Gastrocnemius medialis (tissue), 4 donors: ENCODE measurements at regions of chr19 and their contacts with region 1.

Region 1: GRCh38 chr19:49929611-49930482 is 543 bp upstream of the NUP62 start:
- DNase-seq: peak; percentile 91 to 95
- ATAC-seq: peak; percentile 91 to 95
- H3K4me3 ChIP-seq: peak overlapping the region; percentile 80 to 97 (median 92)
- H3K27ac ChIP-seq: peak overlapping the region; percentile 95 to 98 (median 96)
- H3K4me1 ChIP-seq: peaks cover 24 to 29% of the 10 kb centered on the region in 2 donors
- H3K27me3 ChIP-seq: no peaks in the 10 kb centered on the region
- CTCF ChIP-seq: peak in 1 of 5 experiments; percentile 29
- POLR2A ChIP-seq: peak; percentile 67 to 86

Region 2: DNA sequence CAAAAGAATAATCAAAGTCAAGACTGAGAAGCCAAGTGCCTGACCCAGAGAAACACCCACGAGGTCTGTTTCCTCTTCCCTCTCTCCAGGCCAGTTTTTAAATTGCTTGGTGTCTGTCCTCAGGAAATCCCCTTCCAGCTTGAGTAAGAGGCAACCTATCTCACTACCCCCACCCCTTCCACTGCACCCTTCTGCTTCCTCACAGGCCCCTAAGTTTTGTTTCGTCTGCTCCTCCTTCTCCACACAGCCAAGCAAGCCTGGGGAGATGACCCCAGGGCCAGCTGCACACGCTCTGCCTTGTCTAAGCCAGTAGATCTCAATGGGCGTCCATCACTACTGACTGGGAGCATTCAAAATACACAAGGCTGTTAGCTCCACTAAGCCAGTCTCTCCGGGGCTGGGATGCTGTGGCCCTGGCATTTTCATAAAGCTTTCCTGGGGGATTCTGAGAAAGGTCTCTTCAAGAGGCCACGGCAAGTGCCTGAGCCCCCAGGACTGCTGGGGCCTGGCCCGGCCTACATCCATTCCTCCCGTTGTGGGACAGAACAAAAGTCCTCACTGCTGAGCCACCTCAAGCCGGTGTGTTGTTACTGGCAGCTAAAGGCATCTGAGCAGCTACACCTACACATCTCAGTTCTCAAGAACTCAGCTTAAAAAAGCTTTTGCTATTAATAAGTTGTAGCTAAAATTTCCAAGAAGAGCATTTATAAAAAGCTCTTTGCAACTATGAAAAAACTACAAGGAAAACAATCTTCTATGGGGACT is 18.3 kb before region 1 on chr19:
- in situ Hi-C with region 1: no loop called
- intact Hi-C with region 1: no loop called
- DNase-seq: no peak
- ATAC-seq: peak in 1 of 2 donors; percentile 28
- H3K4me3 ChIP-seq: no peak overlapping the region
- H3K27ac ChIP-seq: no peak overlapping the region
- H3K4me1 ChIP-seq: peaks cover 0 to 11% of the 10 kb centered on the region in 2 donors
- H3K27me3 ChIP-seq: no peaks in the 10 kb centered on the region
- CTCF ChIP-seq: no peak
- POLR2A ChIP-seq: no peak

Region 3: DNA sequence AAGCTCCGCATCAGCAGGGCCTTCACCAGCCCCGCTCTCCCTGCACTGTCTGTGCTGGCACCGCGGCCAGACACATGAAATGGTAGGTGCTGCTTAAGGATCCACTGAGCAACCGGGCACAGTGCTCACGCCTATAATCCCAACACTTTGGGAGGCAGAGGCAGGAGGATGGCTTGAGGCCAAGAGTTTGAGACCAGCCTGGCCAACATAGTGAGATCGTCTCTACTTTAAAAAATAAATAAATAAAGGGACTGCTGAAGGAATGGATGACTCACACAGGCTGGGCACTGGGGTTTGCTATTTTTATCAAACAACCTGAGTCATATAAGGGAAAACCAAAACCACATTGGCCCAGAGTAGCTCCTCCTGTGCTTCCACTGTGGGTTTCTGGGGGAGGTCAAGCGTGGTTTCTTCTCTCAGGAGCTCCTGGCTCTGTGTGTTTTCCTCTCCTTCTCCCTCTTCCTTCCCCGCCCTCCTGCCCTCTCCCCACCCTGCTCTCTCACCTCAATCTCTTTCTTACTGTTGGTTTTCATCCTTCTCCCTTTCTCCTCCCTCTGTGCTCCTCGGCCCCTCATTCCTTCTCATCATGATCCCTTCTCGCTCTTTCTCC is 74.1 kb after region 1 on chr19:
- in situ Hi-C with region 1: no loop called
- intact Hi-C with region 1: loop called (anchors 5 kb)
- DNase-seq: peak; percentile 63 to 85
- ATAC-seq: peak; percentile 99 to 100
- H3K4me3 ChIP-seq: peak overlapping the region in 2 of 4 donors; percentile 7 to 25
- H3K27ac ChIP-seq: peak overlapping the region; percentile 84 to 93 (median 87)
- H3K4me1 ChIP-seq: peaks cover 12 to 19% of the 10 kb centered on the region in 2 donors
- H3K27me3 ChIP-seq: no peaks in the 10 kb centered on the region
- CTCF ChIP-seq: no peak
- POLR2A ChIP-seq: peak in 1 of 2 donors; percentile 43

Region 4: DNA sequence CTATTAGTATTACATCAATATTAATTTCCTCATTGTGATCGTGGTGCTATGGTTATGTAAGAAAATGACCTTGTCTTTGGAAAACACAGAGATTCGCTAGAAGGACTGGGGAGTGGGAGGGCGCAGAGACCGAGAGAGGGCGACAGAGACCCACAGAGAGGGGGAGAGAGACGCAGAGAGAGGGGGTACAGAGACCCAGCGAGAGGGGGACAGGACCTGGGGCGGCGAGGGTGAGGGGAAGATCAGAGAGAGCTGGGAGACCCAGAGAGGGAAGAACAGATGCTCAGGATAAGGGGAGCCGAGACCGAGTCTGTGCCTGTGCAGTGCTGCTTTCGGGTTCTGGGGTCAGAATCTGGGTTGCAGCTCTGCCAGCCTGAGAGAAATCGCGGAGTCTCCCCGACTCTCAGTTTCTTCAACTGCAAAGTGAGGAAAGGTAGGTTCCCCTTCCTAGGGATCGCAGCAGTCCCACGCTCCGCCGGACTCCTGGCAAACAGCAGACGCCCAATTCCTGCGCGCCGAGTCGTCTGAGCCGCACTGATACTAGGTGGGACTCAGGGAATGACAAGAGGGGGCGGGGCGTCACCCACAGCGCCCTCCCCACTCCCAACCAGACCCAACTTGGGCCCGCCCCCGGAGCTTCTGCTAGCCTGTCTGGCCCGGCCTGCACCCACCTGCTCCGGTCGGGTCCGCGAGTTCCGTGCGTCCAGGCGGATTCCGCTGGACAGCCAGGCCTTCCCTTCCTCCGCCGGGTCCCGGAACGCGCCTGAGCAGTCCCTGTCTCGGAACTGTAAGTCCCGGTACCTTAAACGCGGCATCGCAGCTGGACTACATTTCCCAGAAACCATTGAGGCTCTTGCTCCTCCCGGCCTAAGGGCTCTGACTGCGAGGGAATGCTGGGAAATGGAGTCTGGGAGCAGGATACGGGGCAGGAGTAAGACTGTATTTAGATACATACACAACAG is 217.9 kb after region 1 on chr19:
- in situ Hi-C with region 1: loop called in 3 of 4 experiments (anchors 25 kb)
- intact Hi-C with region 1: no loop called
- DNase-seq: peak; percentile 76 to 85
- ATAC-seq: peak; percentile 98 to 99
- H3K4me3 ChIP-seq: peak overlapping the region; percentile 74 to 88 (median 78)
- H3K27ac ChIP-seq: peak overlapping the region; percentile 82 to 92 (median 86)
- H3K4me1 ChIP-seq: peaks cover 4 to 5% of the 10 kb centered on the region in 2 donors
- H3K27me3 ChIP-seq: no peaks in the 10 kb centered on the region
- CTCF ChIP-seq: peak; percentile 52 to 83 (median 65)
- POLR2A ChIP-seq: peak; percentile 19 to 26